Esophagus muscularis mucosa (tissue), 4 donors: ENCODE measurements at regions of chr11 and their contacts with region 1.

Region 1: DNA sequence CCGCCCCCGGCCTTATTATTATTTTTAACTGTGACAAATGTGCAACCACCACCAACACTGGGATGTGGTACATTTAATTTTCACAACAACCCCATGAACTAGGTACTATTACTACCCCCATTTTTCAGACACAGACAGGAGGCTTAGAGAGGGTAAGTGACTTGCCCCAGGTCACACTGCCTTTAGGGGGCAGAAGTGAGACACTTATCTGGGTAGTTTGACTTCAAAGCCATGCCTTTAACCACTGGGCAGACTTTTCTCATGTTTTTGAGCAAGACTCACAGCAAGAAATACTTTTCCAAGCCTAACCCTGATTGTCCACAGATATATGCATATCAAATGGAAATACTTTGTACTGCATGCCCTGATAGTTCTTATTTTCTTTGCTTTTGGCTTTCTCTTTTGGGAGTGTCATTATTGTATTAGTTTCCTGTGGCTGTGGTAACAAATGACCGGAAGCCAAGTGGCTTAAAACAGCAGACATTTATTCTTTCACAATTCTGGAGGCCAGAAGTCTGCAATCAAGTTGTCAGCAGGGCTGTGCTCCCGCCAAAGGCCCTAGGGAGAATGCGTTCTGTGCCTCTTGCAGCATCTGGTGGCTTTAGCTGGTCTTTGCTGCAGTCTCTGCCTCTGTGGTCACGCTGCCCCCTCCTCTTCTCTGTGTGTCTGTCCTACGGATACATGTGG is 110.8 kb downstream of the GRIK4 start:
- DNase-seq: no peak
- H3K4me3 ChIP-seq: no peak overlapping the region
- H3K27ac ChIP-seq: no peak overlapping the region
- H3K4me1 ChIP-seq: peaks cover 0 to 5% (median 0%) of the 10 kb centered on the region in 4 donors
- H3K27me3 ChIP-seq: no peaks in the 10 kb centered on the region
- CTCF ChIP-seq: no peak
- EP300 ChIP-seq: no peak
- POLR2A ChIP-seq: no peak

Region 2: DNA sequence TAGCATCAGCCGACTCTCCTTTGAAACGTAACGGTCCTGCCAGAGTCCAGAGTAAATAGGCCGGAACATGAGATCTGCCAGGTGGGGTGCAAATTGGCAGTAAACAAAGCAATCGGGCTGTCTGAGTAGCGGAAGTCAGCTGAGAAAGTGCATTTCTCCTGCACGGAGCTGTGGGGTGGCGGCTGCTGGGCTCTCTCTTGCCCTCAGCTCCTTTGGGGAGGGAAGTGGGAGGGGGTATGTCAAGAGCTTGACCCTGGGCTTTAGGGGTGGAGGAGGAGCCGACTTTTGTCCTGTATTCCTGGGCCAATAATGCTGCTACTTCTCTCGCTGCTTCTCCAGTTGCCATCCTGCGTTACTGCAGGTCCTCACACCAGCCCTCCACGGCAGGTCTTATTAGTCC is 99.1 kb before region 1 on chr11:
- intact Hi-C with region 1: loop called (anchors 5 kb)
- DNase-seq: no peak
- H3K4me3 ChIP-seq: no peak overlapping the region
- H3K27ac ChIP-seq: no peak overlapping the region
- H3K4me1 ChIP-seq: peaks cover 0 to 8% (median 7%) of the 10 kb centered on the region in 4 donors
- H3K27me3 ChIP-seq: peaks cover 0 to 36% (median 0%) of the 10 kb centered on the region in 4 donors
- CTCF ChIP-seq: no peak
- EP300 ChIP-seq: no peak
- POLR2A ChIP-seq: no peak